ENCODE measurements at regions of chr3 and their contacts with region 1.

Region 1: DNA sequence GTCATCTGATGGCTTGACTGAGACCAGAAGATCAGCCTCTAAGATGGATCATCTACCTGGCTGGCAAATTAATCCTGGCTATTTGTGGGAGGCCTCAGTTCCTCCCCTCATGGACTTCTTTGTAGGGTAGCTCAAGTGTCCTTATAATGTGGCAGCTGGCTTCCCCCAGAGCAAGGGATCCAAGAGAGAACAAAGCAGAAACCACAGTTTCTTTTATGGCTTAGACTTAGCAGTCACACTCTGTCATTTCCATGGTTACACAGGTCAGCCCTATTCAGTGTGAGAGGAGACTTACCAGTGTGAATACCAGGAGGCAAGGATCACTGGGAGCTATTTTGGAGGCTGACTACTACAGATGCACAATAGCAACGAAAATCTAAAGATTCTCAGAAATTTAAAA is 15.3 kb upstream of the ARL14 start:
- DNase-seq: no peak
- ATAC-seq: peak; percentile 58; the same call in 1 of the 2 replicates
- H3K4me3 ChIP-seq: no peak overlapping the region
- H3K27ac ChIP-seq: peak overlapping the region; percentile 41; the same call in 1 of the 2 replicates
- H3K4me1 ChIP-seq: peaks cover 9% of the 10 kb centered on the region; the same call in 1 of the 2 replicates
- H3K27me3 ChIP-seq: no peaks in the 10 kb centered on the region
- CTCF ChIP-seq: no peak

Region 2: DNA sequence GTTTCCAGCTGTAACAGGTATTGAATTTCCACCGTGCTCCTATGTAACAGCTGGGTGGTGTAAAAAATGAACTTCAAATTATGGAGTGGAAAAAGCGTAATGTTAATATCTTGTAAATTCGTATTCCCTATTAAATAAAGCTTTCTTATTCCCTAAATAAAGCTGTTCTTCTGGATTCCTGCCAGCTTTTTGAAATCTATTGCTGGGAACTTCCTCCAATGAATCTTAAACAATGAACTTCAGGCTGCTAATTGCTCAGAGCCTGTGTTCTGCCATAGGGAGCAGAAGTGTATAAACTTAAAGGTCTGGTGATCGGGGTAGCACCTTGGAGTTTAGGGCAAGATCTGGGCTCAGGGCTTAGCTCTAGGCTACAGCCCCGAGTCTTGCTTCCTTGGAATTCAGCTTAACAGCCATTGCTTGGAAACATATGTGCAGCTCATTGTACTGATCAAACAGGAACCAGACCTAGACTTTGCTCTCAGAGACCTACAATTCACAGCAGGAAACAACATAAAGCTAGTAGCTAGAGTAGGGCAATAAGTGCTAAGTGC is 16.7 kb after region 1 on chr3:
- CTCF ChIA-PET with region 1: no interaction called
- POLR2A ChIA-PET with region 1: interaction called, 11 read pairs
- in situ Hi-C with region 1: no loop called
- intact Hi-C with region 1: no loop called
- DNase-seq: no peak
- ATAC-seq: peak; percentile 57
- H3K4me3 ChIP-seq: peak overlapping the region; percentile 40 to 61
- H3K27ac ChIP-seq: peak overlapping the region; percentile 99
- H3K4me1 ChIP-seq: peaks cover 45% of the 10 kb centered on the region
- H3K27me3 ChIP-seq: no peaks in the 10 kb centered on the region
- CTCF ChIP-seq: no peak

Measured in Panc1 (cell line).